ENCODE measurements at regions of chr12 and their contacts with region 1.

Region 1: GRCh38 chr12:51994959-51995358 is 11.8 kb upstream of the TAMALIN start:
- DNase-seq: no peak
- H3K4me3 Mint-ChIP-seq: no peak overlapping the region
- H3K27ac Mint-ChIP-seq: no peak overlapping the region
- H3K4me1 Mint-ChIP-seq: peaks cover 14% of the 10 kb centered on the region
- H3K27me3 Mint-ChIP-seq: no peaks in the 10 kb centered on the region

Region 2: DNA sequence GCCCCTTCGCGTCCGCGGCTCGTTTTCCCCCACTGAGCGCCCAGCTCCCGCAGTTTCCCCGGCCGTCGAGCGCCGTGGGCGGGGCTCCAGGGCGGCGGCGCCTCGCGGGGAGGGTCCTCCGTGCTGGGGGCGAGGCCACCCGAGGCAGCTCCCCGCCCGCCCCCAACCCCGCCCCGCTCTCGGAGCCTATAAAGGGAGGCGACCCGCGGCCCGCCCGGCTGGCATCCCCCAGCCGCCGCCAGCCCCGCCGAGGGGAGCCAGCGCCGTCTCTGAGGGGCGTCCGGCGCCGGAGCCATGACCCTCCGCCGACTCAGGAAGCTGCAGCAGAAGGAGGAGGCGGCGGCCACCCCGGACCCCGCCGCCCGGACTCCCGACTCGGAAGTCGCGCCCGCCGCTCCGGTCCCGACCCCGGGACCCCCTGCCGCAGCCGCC is 11.8 kb after region 1 on chr12 and contains the start of gene TAMALIN:
- intact Hi-C with region 1: loop called (anchors 2 kb)
- DNase-seq: peak; percentile 70
- H3K4me3 Mint-ChIP-seq: peak within 1 kb of the TSS; percentile 84
- H3K27ac Mint-ChIP-seq: peak within 1 kb of the TSS; percentile 67
- H3K4me1 Mint-ChIP-seq: peaks cover 13% of the 10 kb centered on the region
- H3K27me3 Mint-ChIP-seq: peaks cover 38% of the 10 kb centered on the region
- total RNA-seq, gene TAMALIN: 8.9 and 12.8 TPM in 2 replicates

Region 3: DNA sequence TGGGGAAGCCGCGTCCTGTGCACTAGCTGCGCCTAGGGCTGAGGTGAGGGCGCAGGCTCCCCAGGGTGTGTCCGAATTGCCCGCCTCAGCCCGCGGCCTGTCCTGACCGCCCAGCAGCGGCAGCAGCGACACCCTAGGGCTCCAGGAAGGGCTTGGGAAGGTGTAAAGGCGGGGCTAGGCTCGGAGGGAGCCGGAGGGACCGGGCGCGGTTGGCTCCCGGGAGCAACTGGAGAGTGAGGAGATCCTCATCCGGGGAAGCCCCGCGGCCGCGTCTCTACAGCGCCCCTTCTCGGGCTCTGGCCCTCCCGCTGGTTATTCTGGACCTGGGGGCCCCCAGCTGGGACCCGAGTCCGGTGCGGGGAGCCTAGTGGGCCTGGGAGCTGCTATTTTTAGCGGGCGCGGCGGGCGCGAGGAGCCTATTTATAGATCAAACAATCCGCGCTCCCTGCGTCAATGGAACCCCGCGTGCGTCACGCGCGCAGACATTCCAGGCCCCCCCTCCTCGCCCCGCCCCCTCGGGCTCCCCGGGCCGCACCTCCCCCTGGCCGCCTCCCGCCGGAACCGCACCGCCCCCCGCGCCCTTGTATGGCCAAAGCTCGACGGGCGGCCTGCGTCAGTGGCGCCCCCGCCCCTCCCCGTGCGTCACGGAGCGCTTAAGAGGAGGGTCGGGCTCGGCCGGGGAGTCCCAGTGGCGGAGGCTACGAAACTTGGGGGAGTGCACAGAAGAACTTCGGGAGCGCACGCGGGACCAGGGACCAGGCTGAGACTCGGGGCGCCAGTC is 56.0 kb after region 1 on chr12 and contains the start of gene NR4A1:
- intact Hi-C with region 1: loop called (anchors 1 kb)
- DNase-seq: peak; percentile 96
- H3K4me3 Mint-ChIP-seq: peak within 1 kb of the TSS; percentile 96
- H3K27ac Mint-ChIP-seq: peak within 1 kb of the TSS; percentile 92
- H3K4me1 Mint-ChIP-seq: peaks cover 42% of the 10 kb centered on the region
- H3K27me3 Mint-ChIP-seq: no peaks in the 10 kb centered on the region
- total RNA-seq, gene NR4A1: 52.7 and 60.3 TPM in 2 replicates

Region 4: DNA sequence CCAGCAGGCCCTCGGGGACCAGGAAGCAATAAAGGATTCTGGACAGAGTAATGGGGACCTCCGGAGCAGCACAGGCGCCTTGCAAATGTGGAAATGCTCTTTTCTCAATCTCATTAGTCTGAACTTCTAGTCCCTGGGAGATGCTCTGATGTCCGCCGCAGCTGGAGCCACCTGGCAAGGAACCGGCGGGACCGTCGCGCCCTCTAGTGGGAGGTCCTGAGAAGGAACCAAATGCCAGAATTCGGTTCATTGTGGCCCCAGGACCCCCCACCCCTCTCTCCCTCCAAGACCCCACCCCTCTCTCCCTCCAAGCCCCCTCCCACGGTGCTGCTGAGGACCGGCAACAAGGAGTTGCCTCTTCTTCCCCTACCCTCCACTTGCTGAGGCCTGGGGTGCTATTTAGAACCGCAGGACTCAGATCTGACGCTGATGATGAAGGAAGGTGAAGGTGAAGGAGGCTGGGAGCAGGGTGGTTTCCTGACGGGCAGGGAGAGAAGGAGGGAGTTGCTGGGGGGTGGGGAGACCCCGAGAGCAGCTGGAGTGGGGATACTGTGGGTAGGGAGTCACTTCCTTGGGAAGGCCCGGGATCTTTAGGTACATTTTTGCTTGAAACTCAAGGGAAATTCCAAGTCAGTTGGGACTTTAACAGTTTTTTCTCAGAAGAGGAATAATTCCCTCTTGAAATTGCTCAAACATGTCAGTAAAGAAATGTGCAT is 127.0 kb after region 1 on chr12:
- intact Hi-C with region 1: loop called (anchors 1 kb)
- DNase-seq: peak; percentile 50
- H3K4me3 Mint-ChIP-seq: no peak overlapping the region
- H3K27ac Mint-ChIP-seq: no peak overlapping the region
- H3K4me1 Mint-ChIP-seq: peaks cover 29% of the 10 kb centered on the region
- H3K27me3 Mint-ChIP-seq: peaks cover 17% of the 10 kb centered on the region

Measured in activated T-helper 1 cell treated with anti-CD3 and anti-CD28 coated beads, Interleukin-12 subunit alpha, Interleukin-12 subunit beta, Interleukin-2, Interleukin-4 antibody, amounts not matched to agents 30 ng/mL and 10 ng/mL and 1 ng/mL, durations not matched to agents 14 hours and 24 hours and 36 hours (primary cell).